ENCODE measurements at regions of chr16 and their contacts with region 1.

Region 1: DNA sequence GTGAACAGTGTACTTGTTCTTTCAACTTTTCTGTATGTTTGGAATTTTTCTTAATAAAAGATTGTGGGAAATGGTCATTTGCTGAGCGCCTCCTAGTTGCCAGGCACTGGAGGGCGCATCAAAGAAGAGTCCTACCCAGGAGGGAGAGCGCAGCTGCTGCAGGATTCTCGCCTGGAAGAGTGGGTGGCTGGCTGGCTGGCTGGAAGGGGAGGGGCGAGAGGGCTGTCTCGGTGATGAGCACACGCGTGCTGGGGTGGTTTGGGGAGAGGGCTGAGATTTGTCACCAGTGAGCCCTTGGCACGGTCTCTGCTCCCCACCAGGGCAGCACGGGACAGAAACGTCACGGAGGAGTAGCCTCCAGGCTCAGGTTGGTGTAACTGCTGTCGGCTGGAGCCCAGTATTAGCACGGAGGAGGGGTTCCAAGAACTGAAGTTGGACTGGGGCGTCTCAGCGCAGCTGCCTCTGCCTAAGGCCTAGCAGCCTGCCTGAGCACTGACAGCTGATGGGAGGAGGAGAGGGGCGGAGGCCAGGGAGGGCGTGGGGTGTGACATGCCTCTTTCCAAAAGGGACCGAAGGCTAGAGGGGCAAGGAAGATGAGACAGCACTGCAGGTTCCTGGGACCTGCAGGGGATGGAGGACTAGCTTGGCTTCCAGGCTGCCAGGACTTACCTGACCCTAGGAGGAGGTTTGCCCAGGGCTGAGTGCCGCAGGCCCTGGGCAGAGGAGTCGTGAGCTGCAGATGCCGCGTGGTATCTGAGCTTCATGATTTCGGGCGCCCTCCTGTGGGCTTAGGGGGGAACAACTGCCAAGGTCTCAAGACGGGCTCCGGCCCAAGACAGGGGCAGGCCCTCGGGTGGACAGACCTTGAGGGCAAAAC is 5.7 kb downstream of the LDHD start:
- DNase-seq: peak; percentile 87
- H3K4me3 Mint-ChIP-seq: peak overlapping the region; percentile 46
- H3K27ac Mint-ChIP-seq: peak overlapping the region; percentile 88
- H3K4me1 Mint-ChIP-seq: peaks cover 62% of the 10 kb centered on the region
- H3K27me3 Mint-ChIP-seq: no peaks in the 10 kb centered on the region

Region 2: GRCh38 chr16:74991593-74992403 is 119.1 kb before region 1 on chr16:
- CTCF ChIA-PET with region 1: interaction called, 84 read pairs
- POLR2A ChIA-PET with region 1: no interaction called
- DNase-seq: no peak
- H3K4me3 Mint-ChIP-seq: no peak overlapping the region
- H3K27ac Mint-ChIP-seq: no peak overlapping the region
- H3K4me1 Mint-ChIP-seq: no peaks in the 10 kb centered on the region
- H3K27me3 Mint-ChIP-seq: peaks cover 17% of the 10 kb centered on the region

Region 3: DNA sequence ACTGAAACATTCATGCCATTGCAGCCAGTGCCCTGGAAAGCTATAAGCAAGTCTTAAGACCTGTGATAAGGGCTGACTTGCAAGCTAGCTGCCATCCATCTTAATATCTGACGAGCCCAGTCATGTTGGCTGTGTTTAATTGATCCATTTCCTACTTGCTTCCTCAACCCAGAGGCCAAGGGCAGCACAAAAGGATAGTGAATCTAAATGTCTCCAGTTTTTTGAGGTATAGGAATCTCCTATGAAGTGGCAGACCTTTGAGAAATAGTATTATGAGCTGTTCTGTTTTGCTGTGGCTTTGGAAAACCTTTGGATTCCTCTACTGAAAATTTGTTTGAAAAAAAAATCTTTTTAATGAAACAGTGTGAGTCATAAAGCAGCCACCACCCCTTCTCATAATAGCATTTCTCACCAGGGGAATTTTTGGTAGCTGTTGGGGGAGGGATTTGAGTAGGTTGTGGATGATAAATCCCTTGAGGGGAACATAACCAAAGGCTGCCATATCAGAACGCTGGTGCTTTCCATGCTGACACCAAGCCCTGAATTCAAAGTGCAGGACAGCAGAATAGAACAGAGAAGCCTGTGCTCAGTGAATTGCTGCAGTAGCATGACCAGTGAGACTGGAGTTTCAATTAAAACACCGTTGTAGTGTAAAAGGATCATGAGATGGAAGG is 99.1 kb before region 1 on chr16:
- CTCF ChIA-PET with region 1: interaction called, 44 read pairs
- POLR2A ChIA-PET with region 1: no interaction called
- DNase-seq: no peak
- H3K4me3 Mint-ChIP-seq: no peak overlapping the region
- H3K27ac Mint-ChIP-seq: peak overlapping the region; percentile 84
- H3K4me1 Mint-ChIP-seq: peaks cover 29% of the 10 kb centered on the region
- H3K27me3 Mint-ChIP-seq: no peaks in the 10 kb centered on the region

Region 4: DNA sequence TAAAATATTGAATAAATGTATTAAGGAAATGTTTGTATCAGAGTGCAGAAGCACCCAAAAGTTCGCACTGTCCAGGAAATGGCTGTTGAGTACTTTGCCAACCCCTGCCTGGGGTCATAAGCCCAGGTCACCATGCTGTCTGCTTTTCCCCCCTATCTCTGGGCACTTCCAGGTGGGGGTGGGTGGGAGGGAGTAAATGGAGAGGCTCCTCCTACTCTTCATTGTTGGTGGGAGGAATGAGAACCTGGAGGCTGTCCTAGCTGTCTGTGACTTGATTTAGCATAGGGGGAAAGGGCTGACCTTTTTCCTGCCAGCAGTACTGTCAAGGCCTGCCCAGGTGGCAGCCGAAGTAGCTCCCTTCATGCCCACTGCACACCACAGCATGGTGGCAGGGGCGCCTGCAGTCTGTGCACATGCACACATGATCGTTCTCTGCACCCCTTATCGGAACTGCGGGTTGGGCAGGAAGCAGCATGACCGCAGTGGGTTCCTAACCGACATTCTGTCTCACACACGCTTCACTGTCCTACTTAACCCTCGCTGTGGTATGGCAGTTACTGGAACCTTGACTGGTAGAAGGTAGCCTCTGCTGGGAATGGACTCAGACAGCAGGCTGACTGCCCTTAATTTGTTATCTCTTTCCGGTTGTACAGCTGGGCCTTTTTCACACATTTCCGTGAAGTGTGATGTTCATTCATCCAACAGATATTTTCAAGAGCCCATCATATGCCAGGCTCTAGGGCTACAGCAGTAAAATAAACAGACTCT is 35.8 kb before region 1 on chr16:
- CTCF ChIA-PET with region 1: interaction called, 11 read pairs
- POLR2A ChIA-PET with region 1: interaction called, 3 read pairs
- DNase-seq: peak; percentile 89
- H3K4me3 Mint-ChIP-seq: peak overlapping the region; percentile 35
- H3K27ac Mint-ChIP-seq: peak overlapping the region; percentile 87
- H3K4me1 Mint-ChIP-seq: peaks cover 63% of the 10 kb centered on the region
- H3K27me3 Mint-ChIP-seq: no peaks in the 10 kb centered on the region

Region 5: GRCh38 chr16:75121949-75122568 is 11.2 kb after region 1 on chr16:
- CTCF ChIA-PET with region 1: interaction called, 12 read pairs
- POLR2A ChIA-PET with region 1: no interaction called
- DNase-seq: no peak
- H3K4me3 Mint-ChIP-seq: no peak overlapping the region
- H3K27ac Mint-ChIP-seq: no peak overlapping the region
- H3K4me1 Mint-ChIP-seq: no peaks in the 10 kb centered on the region
- H3K27me3 Mint-ChIP-seq: no peaks in the 10 kb centered on the region